Colonic mucosa (tissue), 4 donors: ENCODE measurements at regions of chr1 and their contacts with region 1.

Region 1: GRCh38 chr1:235415008-235415904 is 48.0 kb downstream of the TBCE start:
- DNase-seq: peak; percentile 63
- H3K4me3 ChIP-seq: no peak overlapping the region
- H3K27ac ChIP-seq: no peak overlapping the region
- H3K4me1 ChIP-seq: no peaks in the 10 kb centered on the region
- H3K27me3 ChIP-seq: no peaks in the 10 kb centered on the region
- CTCF ChIP-seq: peak; percentile 83

Region 2: DNA sequence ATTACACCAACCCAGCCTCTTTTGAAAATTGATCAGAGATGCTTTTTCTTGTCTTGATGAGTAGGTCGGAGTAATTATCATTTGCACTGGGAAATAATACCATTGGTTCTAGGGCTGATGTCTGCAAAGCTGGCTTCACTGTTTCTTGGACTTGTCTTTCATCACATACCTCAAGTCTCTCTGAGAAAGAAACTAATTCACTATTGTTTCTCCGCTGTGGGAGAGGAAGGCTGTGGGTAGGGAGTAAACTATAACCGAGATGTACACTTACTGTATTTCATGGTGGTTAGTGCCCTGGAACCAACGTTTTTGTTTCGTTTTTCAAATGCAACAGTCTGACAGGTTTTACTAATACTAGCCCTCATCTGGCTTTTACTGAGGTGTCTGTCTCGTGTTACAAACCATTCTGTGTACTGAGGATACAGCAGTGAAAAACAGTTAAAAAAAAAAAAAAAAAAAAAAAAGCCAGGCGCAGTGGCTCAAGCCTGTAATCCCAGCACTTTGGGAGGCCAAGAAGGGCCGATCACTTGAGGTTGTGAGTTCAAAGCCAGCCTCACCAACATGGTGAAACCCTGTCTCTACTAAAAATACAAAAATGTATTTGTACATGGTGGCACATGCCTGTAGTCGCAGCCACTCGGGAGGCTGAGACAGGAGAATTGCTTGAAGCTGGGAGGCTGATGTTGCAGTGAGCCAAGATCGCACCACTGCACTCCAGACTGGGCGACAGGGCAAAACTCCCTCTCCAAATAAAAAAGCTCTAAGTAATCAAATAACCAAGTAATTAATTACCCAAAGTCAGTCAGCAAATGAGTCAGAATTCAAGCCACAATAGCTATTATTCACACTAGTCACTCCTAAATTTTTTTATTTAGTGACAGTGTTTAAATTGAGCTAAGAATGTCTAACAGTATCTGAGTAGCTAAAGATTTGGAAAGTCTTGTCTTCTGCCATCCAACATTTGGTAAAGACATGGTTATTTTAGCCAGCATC is 309.9 kb before region 1 on chr1:
- intact Hi-C with region 1: loop called (anchors 10 kb)
- DNase-seq: no peak
- H3K4me3 ChIP-seq: no peak overlapping the region
- H3K27ac ChIP-seq: no peak overlapping the region
- H3K4me1 ChIP-seq: no peaks in the 10 kb centered on the region
- H3K27me3 ChIP-seq: no peaks in the 10 kb centered on the region
- CTCF ChIP-seq: no peak

Region 3: GRCh38 chr1:235253219-235253962 is 161.9 kb before region 1 on chr1:
- intact Hi-C with region 1: loop called (anchors 5 kb)
- DNase-seq: peak; percentile 66
- H3K4me3 ChIP-seq: no peak overlapping the region
- H3K27ac ChIP-seq: no peak overlapping the region
- H3K4me1 ChIP-seq: no peaks in the 10 kb centered on the region
- H3K27me3 ChIP-seq: no peaks in the 10 kb centered on the region
- CTCF ChIP-seq: peak; percentile 67

Region 4: DNA sequence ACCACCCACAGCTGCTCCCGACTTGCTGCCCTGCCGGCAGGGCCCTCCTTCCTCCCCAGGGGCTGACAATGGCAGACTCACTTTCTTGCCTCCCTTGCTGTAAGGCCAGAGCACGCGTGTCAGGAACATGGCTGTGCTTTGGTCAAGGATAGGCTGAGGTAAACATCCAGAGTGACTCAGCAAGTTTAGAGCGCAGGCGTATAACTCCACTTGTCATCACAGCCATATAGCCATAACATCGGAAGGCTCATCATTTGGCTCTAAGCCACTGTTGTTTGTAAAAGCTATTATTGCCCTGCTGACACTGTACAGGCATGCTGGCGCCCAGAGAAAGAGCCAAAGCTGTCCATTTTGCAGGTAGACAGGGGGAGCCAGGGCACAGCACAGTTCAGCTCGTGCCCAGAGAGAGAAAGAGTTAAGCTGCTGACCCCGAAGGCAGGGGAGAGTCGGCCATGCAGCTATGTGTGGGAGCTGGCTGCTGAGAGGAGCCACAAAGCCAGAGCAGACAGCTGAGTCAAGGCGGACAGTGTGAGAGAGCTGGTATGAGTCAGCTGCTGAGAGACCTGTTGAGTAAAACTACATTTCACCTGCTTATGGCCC is 173.8 kb after region 1 on chr1:
- intact Hi-C with region 1: no loop called
- DNase-seq: no peak
- H3K4me3 ChIP-seq: no peak overlapping the region
- H3K27ac ChIP-seq: no peak overlapping the region
- H3K4me1 ChIP-seq: no peaks in the 10 kb centered on the region
- H3K27me3 ChIP-seq: no peaks in the 10 kb centered on the region
- CTCF ChIP-seq: no peak